A549 (cell line): ENCODE measurements at regions of chr12 and their contacts with region 1.

Region 1: DNA sequence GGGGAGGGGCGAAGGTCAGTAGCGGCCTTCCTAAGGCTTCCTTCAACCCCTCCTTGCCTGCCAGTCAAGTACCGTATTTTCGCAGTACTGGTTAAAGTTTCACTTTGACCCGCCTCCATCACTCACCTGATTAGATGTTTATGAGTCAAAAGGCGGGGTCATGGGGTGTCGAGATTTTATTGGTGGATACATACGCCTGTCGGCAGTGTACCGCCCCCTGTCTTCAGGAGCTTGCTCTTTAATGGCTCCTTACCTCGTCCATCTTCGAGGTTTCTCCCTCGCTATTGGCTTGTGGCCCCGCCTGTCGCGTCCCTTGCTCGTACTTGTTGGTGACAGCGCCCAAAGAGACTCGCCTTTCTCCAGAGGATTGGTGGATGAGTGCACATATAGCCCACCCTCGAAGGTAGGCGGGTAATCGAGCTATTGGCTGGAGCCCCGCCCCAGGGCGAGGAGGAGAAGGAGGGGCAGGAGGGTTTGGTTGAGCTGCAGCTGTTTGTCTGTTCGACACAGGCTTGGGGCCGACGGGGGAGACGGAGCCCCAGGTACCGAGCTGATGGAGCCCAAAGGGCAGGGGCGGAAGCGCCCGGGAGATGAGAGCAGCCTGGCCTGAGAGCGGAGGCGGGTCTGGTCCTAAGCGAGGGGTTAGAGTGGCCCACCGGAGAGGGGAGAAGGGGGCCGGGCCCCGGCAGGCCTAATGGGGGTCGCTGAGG is at the start of gene RAB5B:
- DNase-seq: peak; percentile 98 to 100
- ATAC-seq: peak; percentile 95 to 96
- H3K4me3 ChIP-seq: peak within 1 kb of the TSS; percentile 93
- H3K27ac ChIP-seq: peak within 1 kb of the TSS; percentile 94 to 95
- H3K4me1 ChIP-seq: peaks cover 20% of the 10 kb centered on the region; the same call in 2 of the 3 replicates
- CTCF ChIP-seq: no peak
- EP300 ChIP-seq: no peak
- POLR2A ChIP-seq: peak; percentile 84
- RAD21 ChIP-seq: no peak
- polyA plus RNA-seq, gene RAB5B: 90.4 and 93.7 TPM in 2 replicates

Region 2: DNA sequence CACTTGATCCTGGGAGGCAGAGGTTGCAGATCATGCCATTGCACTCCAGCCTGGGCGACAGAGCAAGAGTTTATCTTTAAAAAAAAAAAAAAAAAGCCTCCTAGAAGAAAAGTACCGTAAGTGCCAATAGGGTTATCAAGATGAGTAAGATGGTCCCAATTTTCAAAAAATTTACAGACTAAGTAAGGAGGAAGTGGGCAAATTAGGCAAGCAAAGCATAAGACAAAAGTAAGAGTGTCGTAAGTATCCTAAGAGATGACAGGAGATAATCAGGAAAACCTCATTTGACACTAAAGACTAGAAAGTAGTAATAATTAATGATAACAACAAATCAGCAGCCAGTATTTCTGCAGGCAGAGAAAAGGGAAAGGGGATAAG is 58.3 kb before region 1 on chr12:
- CTCF ChIA-PET with region 1: no interaction called
- POLR2A ChIA-PET with region 1: no interaction called
- DNase-seq: no peak
- ATAC-seq: no peak
- H3K4me3 ChIP-seq: no peak overlapping the region
- H3K27ac ChIP-seq: no peak overlapping the region
- H3K4me1 ChIP-seq: peaks cover 28% of the 10 kb centered on the region
- CTCF ChIP-seq: no peak
- EP300 ChIP-seq: no peak
- POLR2A ChIP-seq: no peak
- RAD21 ChIP-seq: no peak

Region 3: GRCh38 chr12:55955800-55956508 is 17.8 kb before region 1 on chr12:
- CTCF ChIA-PET with region 1: interaction called, 12 read pairs
- POLR2A ChIA-PET with region 1: interaction called, 7 read pairs
- DNase-seq: peak; percentile 81 to 87
- ATAC-seq: peak; percentile 93 to 97
- H3K4me3 ChIP-seq: no peak overlapping the region
- H3K27ac ChIP-seq: no peak overlapping the region
- H3K4me1 ChIP-seq: peaks cover 9% of the 10 kb centered on the region
- CTCF ChIP-seq: peak; percentile 49
- EP300 ChIP-seq: no peak
- POLR2A ChIP-seq: no peak
- RAD21 ChIP-seq: peak; percentile 36 to 47